ENCODE measurements at regions of chr3 and their contacts with region 1.

Region 1: DNA sequence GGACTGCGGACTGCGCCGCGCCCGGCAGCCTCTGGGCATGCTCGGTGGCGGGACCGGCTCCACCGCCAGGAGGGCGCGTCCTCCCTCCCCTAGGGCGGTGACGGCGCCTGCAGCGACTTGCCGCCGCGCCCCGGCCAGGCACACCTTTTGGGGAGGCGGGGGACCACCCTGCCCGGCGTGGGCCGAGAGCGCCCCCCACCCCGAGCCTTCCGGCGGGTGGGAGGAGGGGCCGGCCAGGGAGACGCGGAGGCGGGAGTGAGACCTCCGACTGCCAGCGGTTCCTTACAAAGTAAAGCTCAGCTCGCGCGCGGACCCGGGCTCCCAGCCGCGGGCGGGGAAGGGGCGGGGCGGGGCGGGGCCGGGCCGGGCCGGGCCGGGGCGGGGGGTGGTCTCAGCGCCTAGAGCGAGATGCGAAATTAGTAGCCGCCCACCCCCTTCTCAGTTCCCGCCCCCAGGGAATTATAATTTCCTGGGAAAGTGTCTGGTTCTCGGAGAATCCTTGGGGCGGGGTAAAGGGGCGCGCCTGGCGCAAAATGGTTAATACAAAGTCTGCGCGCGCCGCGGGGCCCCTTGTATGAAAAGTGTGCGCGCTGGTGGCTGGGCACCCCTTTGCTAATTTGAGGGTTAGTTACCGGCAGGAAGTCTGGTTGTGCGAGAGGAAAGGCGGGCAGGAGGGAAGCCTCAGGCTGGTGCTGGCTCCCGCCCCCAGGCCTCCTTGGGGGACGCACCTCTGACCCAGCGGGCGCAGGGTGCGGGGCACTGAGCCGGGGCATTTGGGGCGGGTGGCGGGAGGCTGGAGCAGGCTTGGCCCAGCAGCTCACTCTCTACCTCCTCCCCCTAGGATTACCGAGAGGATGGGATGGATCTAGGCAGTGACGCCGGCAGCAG is 224.8 kb upstream of the IL12A start:
- DNase-seq: peak; percentile 45
- ATAC-seq: peak; percentile 83
- H3K4me3 ChIP-seq: peak overlapping the region; percentile 71 to 76
- H3K27ac ChIP-seq: peak overlapping the region; percentile 80
- H3K4me1 ChIP-seq: peaks cover 27% of the 10 kb centered on the region
- H3K27me3 ChIP-seq: no peaks in the 10 kb centered on the region
- CTCF ChIP-seq: peak; percentile 44

Region 2: DNA sequence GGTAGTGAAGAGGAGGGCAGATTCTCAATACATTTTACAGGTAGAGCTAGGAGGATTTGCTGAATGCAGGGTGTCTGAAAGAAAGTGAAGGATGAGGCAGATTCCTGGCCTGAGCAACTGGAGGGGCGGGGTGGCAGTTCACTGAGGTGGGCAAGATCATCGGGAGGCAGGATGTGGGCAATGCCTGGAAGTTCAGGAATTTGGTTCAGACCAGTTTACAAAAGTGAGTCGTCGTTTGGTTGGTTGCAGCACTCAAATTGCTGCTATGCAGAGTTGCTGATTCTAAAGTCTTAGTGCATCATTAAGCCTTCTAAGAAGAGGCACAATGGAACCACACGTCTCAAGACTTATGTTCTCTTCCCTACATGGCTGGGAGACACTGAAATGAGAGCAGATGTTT is 828.0 kb before region 1 on chr3:
- CTCF ChIA-PET with region 1: no interaction called
- POLR2A ChIA-PET with region 1: no interaction called
- in situ Hi-C with region 1: no loop called
- intact Hi-C with region 1: no loop called
- DNase-seq: no peak
- ATAC-seq: no peak
- H3K4me3 ChIP-seq: no peak overlapping the region
- H3K27ac ChIP-seq: no peak overlapping the region
- H3K4me1 ChIP-seq: no peaks in the 10 kb centered on the region
- H3K27me3 ChIP-seq: no peaks in the 10 kb centered on the region
- CTCF ChIP-seq: no peak

Region 3: GRCh38 chr3:159616212-159616825 is 147.5 kb before region 1 on chr3:
- CTCF ChIA-PET with region 1: interaction called, 3 read pairs
- POLR2A ChIA-PET with region 1: no interaction called
- in situ Hi-C with region 1: no loop called
- intact Hi-C with region 1: loop called (anchors 2 kb)
- DNase-seq: no peak
- ATAC-seq: peak; percentile 75
- H3K4me3 ChIP-seq: no peak overlapping the region
- H3K27ac ChIP-seq: no peak overlapping the region
- H3K4me1 ChIP-seq: peaks cover 26% of the 10 kb centered on the region
- H3K27me3 ChIP-seq: no peaks in the 10 kb centered on the region
- CTCF ChIP-seq: peak; percentile 86

Region 4: GRCh38 chr3:159624616-159625015 is 139.2 kb before region 1 on chr3:
- CTCF ChIA-PET with region 1: interaction called, 13 read pairs
- POLR2A ChIA-PET with region 1: no interaction called
- in situ Hi-C with region 1: no loop called
- intact Hi-C with region 1: loop called (anchors 2 kb)
- DNase-seq: no peak
- ATAC-seq: no peak
- H3K4me3 ChIP-seq: no peak overlapping the region
- H3K27ac ChIP-seq: no peak overlapping the region
- H3K4me1 ChIP-seq: peaks cover 36% of the 10 kb centered on the region
- H3K27me3 ChIP-seq: no peaks in the 10 kb centered on the region
- CTCF ChIP-seq: no peak

Region 5: GRCh38 chr3:159804726-159805410 is 41.0 kb after region 1 on chr3:
- CTCF ChIA-PET with region 1: no interaction called
- POLR2A ChIA-PET with region 1: interaction called, 3 read pairs
- in situ Hi-C with region 1: no loop called
- intact Hi-C with region 1: loop called (anchors 5 kb)
- DNase-seq: peak; percentile 73
- ATAC-seq: peak; percentile 99
- H3K4me3 ChIP-seq: no peak overlapping the region
- H3K27ac ChIP-seq: no peak overlapping the region; the same call in 1 of the 2 replicates
- H3K4me1 ChIP-seq: peaks cover 20% of the 10 kb centered on the region
- H3K27me3 ChIP-seq: no peaks in the 10 kb centered on the region
- CTCF ChIP-seq: peak; percentile 96

Region 6: DNA sequence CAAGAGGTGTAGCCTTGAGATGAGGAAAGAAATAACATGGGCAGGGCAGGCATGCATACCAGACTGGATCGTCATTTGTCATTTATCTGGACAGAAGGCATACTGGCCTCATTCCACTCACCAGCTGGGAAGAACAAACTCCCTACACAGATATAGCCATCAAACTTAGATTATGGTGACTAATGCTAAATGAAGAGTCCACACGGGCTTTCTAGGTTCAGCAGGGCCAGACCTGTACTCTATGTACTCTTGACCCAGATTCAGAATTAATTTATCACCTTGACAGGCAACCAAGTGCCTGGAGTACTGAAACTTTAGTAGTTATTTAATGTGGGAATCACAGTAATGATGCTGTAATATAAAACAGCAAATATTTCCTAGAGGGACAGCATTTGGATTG is 60.5 kb after region 1 on chr3:
- CTCF ChIA-PET with region 1: no interaction called
- POLR2A ChIA-PET with region 1: no interaction called
- in situ Hi-C with region 1: no loop called
- intact Hi-C with region 1: no loop called
- DNase-seq: peak; percentile 56
- ATAC-seq: peak; percentile 69
- H3K4me3 ChIP-seq: no peak overlapping the region
- H3K27ac ChIP-seq: no peak overlapping the region
- H3K4me1 ChIP-seq: peaks cover 25% of the 10 kb centered on the region
- H3K27me3 ChIP-seq: no peaks in the 10 kb centered on the region
- CTCF ChIP-seq: no peak

Region 7: GRCh38 chr3:159852821-159853505 is 89.1 kb after region 1 on chr3:
- CTCF ChIA-PET with region 1: no interaction called
- POLR2A ChIA-PET with region 1: no interaction called
- in situ Hi-C with region 1: no loop called
- intact Hi-C with region 1: no loop called
- DNase-seq: no peak
- ATAC-seq: peak; percentile 69
- H3K4me3 ChIP-seq: peak overlapping the region; percentile 12 to 40
- H3K27ac ChIP-seq: peak overlapping the region; percentile 74
- H3K4me1 ChIP-seq: peaks cover 39% of the 10 kb centered on the region
- H3K27me3 ChIP-seq: no peaks in the 10 kb centered on the region
- CTCF ChIP-seq: no peak

Region 8: GRCh38 chr3:161171113-161171512 is 1407.3 kb after region 1 on chr3:
- CTCF ChIA-PET with region 1: no interaction called
- POLR2A ChIA-PET with region 1: no interaction called
- in situ Hi-C with region 1: no loop called
- intact Hi-C with region 1: no loop called
- DNase-seq: no peak
- ATAC-seq: no peak
- H3K4me3 ChIP-seq: no peak overlapping the region
- H3K27ac ChIP-seq: no peak overlapping the region
- H3K4me1 ChIP-seq: no peaks in the 10 kb centered on the region
- H3K27me3 ChIP-seq: no peaks in the 10 kb centered on the region
- CTCF ChIP-seq: no peak

Measured in Panc1 (cell line).